ENCODE measurements at regions of chr5 and their contacts with region 1.

Region 1: GRCh38 chr5:104951829-104952228 is 1389.2 kb upstream of the NUDT12 start:
- DNase-seq: no peak
- ATAC-seq: no peak
- H3K4me3 ChIP-seq: no peak overlapping the region
- H3K27ac ChIP-seq: no peak overlapping the region
- H3K4me1 ChIP-seq: no peaks in the 10 kb centered on the region
- H3K27me3 ChIP-seq: no peaks in the 10 kb centered on the region
- CTCF ChIP-seq: no peak

Region 2: GRCh38 chr5:104932431-104932830 is 19.4 kb before region 1 on chr5:
- CTCF ChIA-PET with region 1: no interaction called
- POLR2A ChIA-PET with region 1: no interaction called
- intact Hi-C with region 1: loop called (anchors 1 kb)
- DNase-seq: no peak
- ATAC-seq: no peak
- H3K4me3 ChIP-seq: no peak overlapping the region
- H3K27ac ChIP-seq: no peak overlapping the region
- H3K4me1 ChIP-seq: no peaks in the 10 kb centered on the region
- H3K27me3 ChIP-seq: no peaks in the 10 kb centered on the region
- CTCF ChIP-seq: no peak

Measured in PC-3 (cell line).